Activated CD8-positive, alpha-beta T cell treated with anti-CD3 and anti-CD28 coated beads for 36 hours (primary cell): ENCODE measurements at regions of chr11 and their contacts with region 1.

Region 1: GRCh38 chr11:57480409-57481137 is 20.2 kb downstream of the RTN4RL2 start:
- DNase-seq: peak; percentile 88
- ATAC-seq: peak; percentile 63
- H3K4me3 Mint-ChIP-seq: no peak overlapping the region
- H3K27ac Mint-ChIP-seq: no peak overlapping the region
- H3K4me1 Mint-ChIP-seq: peaks cover 19% of the 10 kb centered on the region
- H3K27me3 Mint-ChIP-seq: peaks cover 12% of the 10 kb centered on the region
- CTCF ChIP-seq: peak; percentile 90

Region 2: DNA sequence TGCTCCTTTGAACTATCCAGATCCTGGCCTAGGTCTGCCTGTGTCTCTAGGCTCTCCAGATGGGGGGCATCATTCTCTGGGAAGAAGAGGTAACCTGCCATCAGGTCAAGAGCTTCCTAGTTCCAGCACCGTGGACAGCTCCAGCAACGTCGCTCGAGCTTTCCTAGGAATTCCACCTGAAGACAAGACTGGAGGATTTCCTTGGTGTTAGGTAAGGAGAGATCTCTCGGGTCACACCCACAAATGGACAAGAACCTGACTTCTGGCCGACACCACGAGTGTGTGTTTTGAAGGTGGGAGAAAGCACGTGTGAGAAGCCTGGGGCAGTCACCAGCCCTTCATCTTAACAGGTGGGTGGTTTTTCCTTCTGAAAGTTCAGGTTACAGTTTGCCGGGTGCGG is 100.8 kb before region 1 on chr11:
- CTCF ChIA-PET with region 1: no interaction called
- POLR2A ChIA-PET with region 1: no interaction called
- intact Hi-C with region 1: no loop called
- DNase-seq: no peak
- ATAC-seq: no peak
- H3K4me3 Mint-ChIP-seq: no peak overlapping the region
- H3K27ac Mint-ChIP-seq: no peak overlapping the region
- H3K4me1 Mint-ChIP-seq: no peaks in the 10 kb centered on the region
- H3K27me3 Mint-ChIP-seq: peaks cover 18% of the 10 kb centered on the region
- CTCF ChIP-seq: no peak

Region 3: GRCh38 chr11:57463671-57464538 is 16.7 kb before region 1 on chr11:
- CTCF ChIA-PET with region 1: interaction called, 254 read pairs
- POLR2A ChIA-PET with region 1: interaction called, 10 read pairs
- intact Hi-C with region 1: loop called (anchors 2 kb)
- DNase-seq: no peak
- ATAC-seq: no peak
- H3K4me3 Mint-ChIP-seq: no peak overlapping the region
- H3K27ac Mint-ChIP-seq: no peak overlapping the region
- H3K4me1 Mint-ChIP-seq: peaks cover 9% of the 10 kb centered on the region
- H3K27me3 Mint-ChIP-seq: peaks cover 20% of the 10 kb centered on the region
- CTCF ChIP-seq: no peak

Region 4: DNA sequence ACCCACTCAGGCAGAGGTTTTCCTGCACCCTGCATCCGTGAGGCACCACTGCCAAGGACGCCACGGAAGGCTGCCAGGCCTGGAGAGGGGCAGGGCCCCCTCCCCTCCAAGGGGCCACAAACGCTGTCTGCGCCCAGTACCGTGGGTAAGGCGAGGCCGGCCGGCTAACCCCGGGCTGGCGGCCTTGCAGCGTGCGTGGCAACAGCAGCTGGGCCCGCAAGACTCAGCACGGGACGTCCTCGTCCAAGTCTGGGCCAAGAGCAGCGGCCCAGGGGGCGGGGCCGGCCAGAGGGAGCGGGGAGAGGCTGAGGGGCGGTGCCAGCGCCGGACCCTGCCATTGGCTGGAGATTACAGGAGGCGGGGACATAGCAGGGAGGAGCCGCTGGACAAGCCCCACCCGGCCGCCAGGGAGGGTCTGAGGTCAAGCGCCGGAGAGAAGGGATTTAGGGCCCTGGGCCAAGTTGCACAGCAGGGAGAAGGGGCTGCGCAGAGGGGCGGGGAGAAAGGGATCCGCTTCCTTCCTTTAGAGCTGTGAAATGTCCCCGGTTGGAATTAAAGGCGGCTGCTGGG is 18.9 kb after region 1 on chr11:
- CTCF ChIA-PET with region 1: interaction called, 141 read pairs
- POLR2A ChIA-PET with region 1: no interaction called
- intact Hi-C with region 1: no loop called
- DNase-seq: peak; percentile 61
- ATAC-seq: peak; percentile 93
- H3K4me3 Mint-ChIP-seq: no peak overlapping the region
- H3K27ac Mint-ChIP-seq: no peak overlapping the region
- H3K4me1 Mint-ChIP-seq: peaks cover 6% of the 10 kb centered on the region
- H3K27me3 Mint-ChIP-seq: no peaks in the 10 kb centered on the region
- CTCF ChIP-seq: no peak

Region 5: DNA sequence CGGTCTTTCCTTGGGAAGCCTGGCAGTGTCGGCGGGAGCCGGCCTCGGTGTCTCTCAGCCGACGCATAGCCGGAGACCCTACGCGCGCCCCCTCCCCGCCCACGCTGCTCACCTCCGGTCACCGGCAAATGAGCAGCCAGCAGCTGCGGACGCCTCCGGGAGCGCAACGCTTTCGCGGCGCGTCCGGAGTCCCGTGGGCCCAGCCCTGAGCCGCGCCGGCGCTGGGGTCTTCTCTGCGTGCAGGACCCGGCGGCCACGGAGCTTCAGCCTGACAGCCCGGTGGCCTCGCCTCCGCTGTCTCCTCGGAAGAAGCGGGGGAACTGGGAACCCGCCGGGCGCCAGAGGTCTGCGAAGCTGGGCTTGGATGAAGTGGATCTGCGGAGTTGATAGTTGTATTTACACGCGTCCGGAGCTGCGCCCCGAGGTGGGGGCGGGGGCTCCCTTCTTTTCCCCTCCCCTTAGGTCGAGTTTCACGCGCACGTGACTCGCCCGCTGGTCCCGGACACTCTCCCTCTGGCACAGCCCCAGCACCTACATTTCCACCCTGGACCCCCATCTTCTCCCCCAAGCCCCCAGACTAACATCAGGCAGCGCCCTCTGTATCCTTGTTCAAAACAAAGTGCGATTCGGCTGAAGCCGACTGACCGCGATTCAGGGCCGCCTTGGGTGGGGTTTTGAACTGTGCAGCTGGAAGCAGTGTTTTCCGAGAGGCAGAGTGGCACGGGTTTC is 34.9 kb after region 1 on chr11 and contains the start of gene SLC43A1:
- CTCF ChIA-PET with region 1: interaction called, 14 read pairs
- POLR2A ChIA-PET with region 1: interaction called, 6 read pairs
- intact Hi-C with region 1: no loop called
- DNase-seq: peak; percentile 48
- ATAC-seq: peak; percentile 29
- H3K4me3 Mint-ChIP-seq: peak within 1 kb of the TSS; percentile 94
- H3K27ac Mint-ChIP-seq: peak within 1 kb of the TSS; percentile 95
- H3K4me1 Mint-ChIP-seq: peaks cover 29% of the 10 kb centered on the region
- H3K27me3 Mint-ChIP-seq: no peaks in the 10 kb centered on the region
- CTCF ChIP-seq: no peak
- total RNA-seq, gene SLC43A1: 32.1 to 34.0 TPM

Region 6: GRCh38 chr11:57630193-57630592 is 149.6 kb after region 1 on chr11:
- CTCF ChIA-PET with region 1: no interaction called
- POLR2A ChIA-PET with region 1: no interaction called
- intact Hi-C with region 1: no loop called
- DNase-seq: no peak
- ATAC-seq: no peak
- H3K4me3 Mint-ChIP-seq: no peak overlapping the region
- H3K27ac Mint-ChIP-seq: no peak overlapping the region
- H3K4me1 Mint-ChIP-seq: no peaks in the 10 kb centered on the region
- H3K27me3 Mint-ChIP-seq: peaks cover 17% of the 10 kb centered on the region
- CTCF ChIP-seq: no peak